MCF 10A (cell line): ENCODE measurements at regions of chr17 and their contacts with region 1.

Region 1: DNA sequence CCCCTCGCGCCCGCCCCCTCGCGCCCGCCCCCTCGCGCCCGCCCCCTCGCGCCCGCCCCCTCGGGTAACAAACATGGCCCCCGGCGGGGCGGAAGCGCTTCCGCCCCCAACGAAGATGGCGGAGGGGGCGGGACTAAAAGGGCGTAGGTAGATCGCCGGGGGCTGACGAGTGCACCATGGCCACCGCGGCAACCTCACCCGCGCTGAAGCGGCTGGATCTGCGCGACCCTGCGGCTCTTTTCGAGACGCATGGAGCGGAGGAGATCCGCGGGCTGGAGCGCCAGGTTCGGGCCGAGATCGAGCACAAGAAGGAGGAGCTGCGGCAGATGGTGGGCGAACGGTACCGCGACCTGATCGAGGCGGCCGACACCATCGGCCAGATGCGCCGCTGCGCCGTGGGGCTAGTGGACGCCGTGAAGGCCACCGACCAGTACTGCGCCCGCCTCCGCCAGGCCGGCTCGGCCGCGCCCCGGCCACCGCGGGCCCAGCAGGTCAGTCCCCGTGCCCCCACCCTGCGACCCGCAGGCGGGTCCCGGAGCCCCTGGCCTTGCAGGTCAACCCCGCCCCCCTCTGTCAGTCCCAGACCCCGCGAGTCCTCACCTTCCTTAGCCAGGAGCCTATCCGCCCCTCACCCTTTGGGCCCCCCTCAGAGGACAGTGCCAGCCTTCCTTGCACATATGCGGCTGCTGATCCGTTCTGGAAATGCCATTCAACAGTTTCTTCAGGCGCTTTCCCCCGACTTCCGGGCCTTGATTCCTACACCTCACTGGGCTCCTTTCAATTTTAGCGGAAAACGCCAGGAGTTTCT is at the start of gene COG1:
- DNase-seq: peak; percentile 89
- H3K4me3 Mint-ChIP-seq: peak within 1 kb of the TSS; percentile 95
- H3K27ac Mint-ChIP-seq: peak within 1 kb of the TSS; percentile 93
- H3K4me1 Mint-ChIP-seq: peaks cover 6% of the 10 kb centered on the region
- H3K27me3 Mint-ChIP-seq: no peaks in the 10 kb centered on the region
- CTCF ChIP-seq: no peak
- total RNA-seq, gene COG1: 37.0 and 42.8 TPM in 2 replicates

Region 2: DNA sequence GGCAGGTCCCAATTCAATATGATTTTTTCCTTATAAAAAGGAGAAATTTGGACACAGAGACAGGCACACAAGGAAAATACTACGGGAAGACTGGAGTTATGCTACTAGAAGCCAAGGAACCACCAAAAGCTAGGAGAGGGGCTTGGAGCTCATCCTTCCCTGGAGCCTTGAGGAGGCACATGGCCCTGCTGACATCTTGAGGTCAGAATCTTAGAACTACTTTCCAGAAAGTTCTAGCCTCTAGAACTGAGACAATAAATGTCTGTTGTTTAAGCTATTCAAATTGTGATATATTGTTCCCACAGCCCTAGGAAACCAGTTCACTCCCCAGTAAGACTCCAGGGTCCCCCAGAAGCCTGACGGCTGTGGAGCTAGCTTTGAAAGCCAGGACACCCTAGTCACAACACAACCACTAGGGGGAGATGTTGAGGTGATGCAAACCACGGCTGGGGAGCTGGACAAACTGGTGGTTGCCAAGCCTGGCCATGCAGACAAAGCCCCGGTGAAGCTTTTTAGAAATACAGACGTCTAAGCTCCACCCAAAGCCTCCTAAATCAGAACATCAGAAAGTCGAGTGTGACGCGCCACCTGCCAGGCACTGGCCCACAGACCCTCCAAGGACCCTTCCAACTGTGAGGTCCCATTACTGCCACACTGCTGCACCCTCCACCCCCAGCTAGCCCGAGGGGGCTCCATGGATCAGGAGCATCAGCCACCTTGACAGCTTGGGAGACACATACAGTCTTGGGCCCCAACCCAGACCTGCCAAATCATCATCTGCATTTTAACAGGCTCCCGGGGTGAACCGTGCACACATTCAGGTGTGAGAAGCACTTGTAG is 207.0 kb before region 1 on chr17:
- CTCF ChIA-PET with region 1: interaction called, 5 read pairs
- POLR2A ChIA-PET with region 1: no interaction called
- intact Hi-C with region 1: loop called (anchors 1 kb)
- DNase-seq: peak; percentile 82
- H3K4me3 Mint-ChIP-seq: no peak overlapping the region
- H3K27ac Mint-ChIP-seq: no peak overlapping the region
- H3K4me1 Mint-ChIP-seq: no peaks in the 10 kb centered on the region
- H3K27me3 Mint-ChIP-seq: no peaks in the 10 kb centered on the region
- CTCF ChIP-seq: peak; percentile 84

Region 3: GRCh38 chr17:73231841-73232586 is 38.9 kb after region 1 on chr17:
- CTCF ChIA-PET with region 1: interaction called, 13 read pairs
- POLR2A ChIA-PET with region 1: interaction called, 148 read pairs
- intact Hi-C with region 1: loop called (anchors 1 kb)
- DNase-seq: peak; percentile 93
- H3K4me3 Mint-ChIP-seq: peak overlapping the region; percentile 97
- H3K27ac Mint-ChIP-seq: peak overlapping the region; percentile 90
- H3K4me1 Mint-ChIP-seq: peaks cover 28% of the 10 kb centered on the region
- H3K27me3 Mint-ChIP-seq: no peaks in the 10 kb centered on the region
- CTCF ChIP-seq: no peak

Region 4: GRCh38 chr17:73255671-73256181 is 62.6 kb after region 1 on chr17:
- CTCF ChIA-PET with region 1: interaction called, 14 read pairs
- POLR2A ChIA-PET with region 1: interaction called, 3 read pairs
- intact Hi-C with region 1: no loop called
- DNase-seq: peak; percentile 43
- H3K4me3 Mint-ChIP-seq: no peak overlapping the region
- H3K27ac Mint-ChIP-seq: no peak overlapping the region
- H3K4me1 Mint-ChIP-seq: no peaks in the 10 kb centered on the region
- H3K27me3 Mint-ChIP-seq: no peaks in the 10 kb centered on the region
- CTCF ChIP-seq: peak; percentile 98